ENCODE measurements at regions of chr15 and their contacts with region 1.

Region 1: GRCh38 chr15:80152180-80152845 is 486 bp upstream of the FAH start:
- DNase-seq: peak; percentile 74
- H3K4me3 Mint-ChIP-seq: peak overlapping the region; percentile 83
- H3K27ac Mint-ChIP-seq: peak overlapping the region; percentile 73
- H3K4me1 Mint-ChIP-seq: peaks cover 35% of the 10 kb centered on the region
- H3K27me3 Mint-ChIP-seq: peaks cover 15% of the 10 kb centered on the region

Region 2: DNA sequence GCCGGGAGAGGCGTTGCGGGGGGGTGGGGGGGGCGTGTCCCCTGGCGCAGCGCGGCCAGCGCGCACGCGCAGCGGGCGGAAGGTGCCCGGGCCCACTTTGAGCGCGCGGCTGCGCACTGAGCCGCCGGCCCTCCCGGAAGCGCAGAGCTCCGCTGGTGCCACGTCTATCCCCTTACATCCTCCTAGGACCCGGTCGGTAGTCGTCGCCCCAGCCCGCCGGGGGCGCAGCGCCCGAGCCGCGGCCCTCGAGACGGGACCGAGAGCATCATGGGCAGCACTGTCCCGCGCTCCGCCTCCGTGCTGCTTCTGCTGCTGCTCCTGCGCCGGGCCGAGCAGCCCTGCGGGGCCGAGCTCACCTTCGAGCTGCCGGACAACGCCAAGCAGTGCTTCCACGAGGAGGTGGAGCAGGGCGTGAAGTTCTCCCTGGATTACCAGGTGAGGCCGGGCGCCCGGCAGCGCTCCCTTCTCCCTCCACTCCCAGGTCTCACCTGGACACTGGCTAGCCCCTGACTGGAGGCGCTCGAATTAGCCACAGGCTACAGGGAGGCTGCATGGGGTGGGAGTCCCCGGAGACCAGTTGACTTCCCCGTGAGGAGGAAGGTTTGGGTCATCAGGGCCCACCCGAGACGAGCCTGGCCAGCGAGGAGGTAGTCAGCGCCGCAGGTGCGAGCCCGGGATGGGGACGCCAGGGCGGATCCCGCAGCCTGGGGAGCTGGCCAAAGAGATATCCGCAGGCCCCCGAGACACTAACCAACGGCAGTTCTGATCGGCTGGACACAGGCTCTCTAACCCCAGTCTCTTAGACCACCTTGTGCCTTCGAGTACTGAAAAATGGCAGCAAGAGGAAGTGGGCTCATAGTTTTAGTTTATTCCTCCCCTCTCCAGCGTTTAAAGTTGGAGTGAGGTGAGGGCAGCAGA is 841.1 kb before region 1 on chr15 and contains the start of gene TMED3:
- intact Hi-C with region 1: loop called (anchors 5 kb)
- DNase-seq: peak; percentile 82
- H3K4me3 Mint-ChIP-seq: peak within 1 kb of the TSS; percentile 95
- H3K27ac Mint-ChIP-seq: peak within 1 kb of the TSS; percentile 68
- H3K4me1 Mint-ChIP-seq: peaks cover 38% of the 10 kb centered on the region
- H3K27me3 Mint-ChIP-seq: peaks cover 27% of the 10 kb centered on the region
- total RNA-seq, gene TMED3: 60.8 and 63.4 TPM in 2 replicates

Region 3: GRCh38 chr15:79881254-79881653 is 271.1 kb before region 1 on chr15:
- intact Hi-C with region 1: no loop called
- DNase-seq: no peak
- H3K4me3 Mint-ChIP-seq: no peak overlapping the region
- H3K27ac Mint-ChIP-seq: no peak overlapping the region
- H3K4me1 Mint-ChIP-seq: no peaks in the 10 kb centered on the region
- H3K27me3 Mint-ChIP-seq: no peaks in the 10 kb centered on the region

Region 4: DNA sequence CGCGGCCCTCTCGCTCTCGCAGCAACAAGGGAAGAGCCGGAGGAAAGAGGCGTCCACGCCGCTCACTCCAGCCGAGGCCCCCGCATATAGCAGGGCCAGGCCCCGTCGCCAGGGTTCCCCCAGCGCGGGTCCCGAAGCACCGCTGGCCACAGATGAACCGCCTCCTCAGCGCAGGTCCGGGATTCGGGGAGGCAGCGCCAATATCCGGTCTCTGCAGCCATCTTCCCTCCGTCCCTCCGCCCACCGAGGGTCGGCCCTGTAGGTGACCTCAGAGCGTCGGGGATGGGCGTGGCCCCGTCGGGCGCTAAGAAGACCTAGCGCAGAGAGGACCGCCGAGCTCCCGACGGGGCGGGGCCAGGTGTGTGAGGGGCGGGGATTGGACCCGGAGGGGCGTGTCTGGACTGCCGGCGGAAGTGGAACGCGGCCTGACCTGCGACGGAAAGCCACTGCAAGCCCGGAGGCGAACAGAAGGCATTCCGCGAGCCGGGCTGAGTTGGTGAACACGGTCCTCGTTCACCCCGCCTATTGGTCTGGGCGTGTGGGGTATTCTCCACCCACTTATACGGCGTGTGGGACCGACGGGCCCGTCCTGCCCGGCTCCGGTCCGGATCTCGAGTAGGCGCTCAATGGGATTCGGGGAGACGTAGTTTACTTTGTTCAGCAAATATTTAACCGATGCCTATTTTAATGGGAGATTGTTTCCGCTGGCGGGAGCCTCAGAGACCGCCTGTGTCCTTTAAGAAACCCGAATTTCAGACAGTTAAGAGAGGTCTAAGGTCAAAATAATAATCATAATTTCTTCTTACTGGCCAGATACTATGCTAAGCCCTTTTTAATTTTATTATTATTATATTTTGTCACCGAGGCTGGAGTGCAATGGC is 228.6 kb before region 1 on chr15:
- intact Hi-C with region 1: loop called (anchors 1 kb)
- DNase-seq: peak; percentile 99
- H3K4me3 Mint-ChIP-seq: peak overlapping the region; percentile 92
- H3K27ac Mint-ChIP-seq: peak overlapping the region; percentile 95
- H3K4me1 Mint-ChIP-seq: peaks cover 16% of the 10 kb centered on the region
- H3K27me3 Mint-ChIP-seq: no peaks in the 10 kb centered on the region

Region 5: GRCh38 chr15:80058851-80059785 is 93.2 kb before region 1 on chr15 and contains the start of gene ZFAND6:
- intact Hi-C with region 1: loop called (anchors 1 kb)
- DNase-seq: peak; percentile 95
- H3K4me3 Mint-ChIP-seq: peak within 1 kb of the TSS; percentile 91
- H3K27ac Mint-ChIP-seq: peak within 1 kb of the TSS; percentile 90
- H3K4me1 Mint-ChIP-seq: peaks cover 35% of the 10 kb centered on the region
- H3K27me3 Mint-ChIP-seq: peaks cover 2% of the 10 kb centered on the region
- total RNA-seq, gene ZFAND6: 43.3 and 50.3 TPM in 2 replicates

Region 6: DNA sequence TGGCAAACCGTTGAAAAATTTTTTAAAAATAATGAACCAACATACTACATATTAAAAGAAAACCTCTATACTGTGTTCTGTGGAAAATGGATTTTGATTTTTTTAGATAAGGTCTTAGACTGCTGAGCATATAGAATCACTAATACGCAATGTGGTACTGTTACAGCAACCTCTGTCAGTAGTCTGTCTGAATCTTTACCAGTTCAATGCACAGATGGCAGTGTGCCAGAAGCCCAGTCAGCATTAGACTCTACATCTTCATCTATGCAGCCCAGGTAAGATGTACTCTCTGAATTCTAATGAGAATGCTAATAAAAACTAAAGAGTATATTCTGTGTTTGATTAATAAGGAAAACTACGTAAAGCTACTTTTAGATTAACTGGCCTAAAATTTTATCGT is 30.8 kb before region 1 on chr15:
- intact Hi-C with region 1: no loop called
- DNase-seq: no peak
- H3K4me3 Mint-ChIP-seq: no peak overlapping the region
- H3K27ac Mint-ChIP-seq: no peak overlapping the region
- H3K4me1 Mint-ChIP-seq: peaks cover 13% of the 10 kb centered on the region
- H3K27me3 Mint-ChIP-seq: no peaks in the 10 kb centered on the region

Region 7: DNA sequence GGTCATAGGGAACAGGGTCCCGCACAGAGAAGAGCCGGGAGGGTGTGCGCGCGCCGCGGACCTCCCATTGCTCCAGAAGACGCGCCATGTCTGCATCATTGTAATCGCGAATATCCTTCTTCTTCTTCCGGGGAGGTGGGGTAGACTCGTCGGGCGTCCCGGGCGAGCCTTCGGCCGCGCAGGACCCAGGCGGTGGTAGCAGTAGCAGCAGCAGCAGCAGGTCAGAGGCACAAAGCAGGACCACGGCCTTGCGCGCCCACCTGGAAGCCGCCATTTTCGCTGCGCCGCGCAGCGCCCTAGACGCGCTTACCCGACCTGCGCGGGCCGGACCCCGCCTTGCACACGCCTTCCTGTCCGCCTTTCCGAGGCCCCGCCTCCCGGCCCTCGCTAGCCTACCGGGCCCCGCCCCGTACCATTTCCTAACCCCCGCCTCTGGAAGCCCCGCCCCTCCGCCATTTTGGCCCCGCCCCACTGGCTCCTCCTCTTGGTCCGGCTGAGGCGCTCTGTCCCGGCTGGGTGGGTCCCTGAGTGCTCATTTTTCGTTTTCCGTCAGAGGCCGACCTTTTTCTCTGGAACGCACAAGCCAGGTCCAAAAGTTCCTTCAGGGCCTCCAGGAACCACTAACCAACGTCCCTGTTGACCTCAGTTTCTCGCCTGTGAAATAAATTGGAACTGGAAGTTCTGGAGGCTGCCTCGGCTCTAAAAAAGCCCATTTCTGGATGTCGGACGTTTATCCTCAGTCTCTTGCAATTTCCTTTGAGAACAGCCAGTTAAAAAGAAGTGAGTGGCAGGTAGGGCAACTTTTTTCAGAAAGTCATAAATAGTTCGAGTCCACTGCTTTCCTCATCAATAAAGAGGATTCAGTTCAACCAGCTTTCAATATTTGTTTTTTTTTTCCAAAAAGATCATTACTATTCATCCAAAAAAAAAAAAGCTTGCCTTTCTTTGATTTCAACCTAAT is 837.5 kb after region 1 on chr15 and contains the start of gene MESD:
- intact Hi-C with region 1: loop called (anchors 10 kb)
- DNase-seq: peak; percentile 92
- H3K4me3 Mint-ChIP-seq: peak within 1 kb of the TSS; percentile 98
- H3K27ac Mint-ChIP-seq: peak within 1 kb of the TSS; percentile 97
- H3K4me1 Mint-ChIP-seq: peaks cover 58% of the 10 kb centered on the region
- H3K27me3 Mint-ChIP-seq: no peaks in the 10 kb centered on the region
- total RNA-seq, gene MESD: 29.5 and 30.2 TPM in 2 replicates

Region 8: GRCh38 chr15:81323944-81324881 is 1171.9 kb after region 1 on chr15 and contains the start of gene STARD5:
- intact Hi-C with region 1: loop called (anchors 10 kb)
- DNase-seq: peak; percentile 98
- H3K4me3 Mint-ChIP-seq: peak within 1 kb of the TSS; percentile 98
- H3K27ac Mint-ChIP-seq: peak within 1 kb of the TSS; percentile 76
- H3K4me1 Mint-ChIP-seq: peaks cover 38% of the 10 kb centered on the region
- H3K27me3 Mint-ChIP-seq: no peaks in the 10 kb centered on the region
- total RNA-seq, gene STARD5: 4.5 and 4.6 TPM in 2 replicates

Measured in activated T-helper 1 cell treated with anti-CD3 and anti-CD28 coated beads, Interleukin-12 subunit alpha, Interleukin-12 subunit beta, Interleukin-2, Interleukin-4 antibody, amounts not matched to agents 30 ng/mL and 10 ng/mL and 1 ng/mL, durations not matched to agents 14 hours and 24 hours and 36 hours (primary cell).